ENCODE measurements at regions of chr10 and their contacts with region 1.

Region 1: GRCh38 chr10:105950410-105950809 is 1214.1 kb downstream of the SORCS1 start:
- DNase-seq: peak; percentile 56
- H3K4me3 Mint-ChIP-seq: no peak overlapping the region
- H3K27ac Mint-ChIP-seq: no peak overlapping the region
- H3K4me1 Mint-ChIP-seq: no peaks in the 10 kb centered on the region
- H3K27me3 Mint-ChIP-seq: no peaks in the 10 kb centered on the region

Region 2: GRCh38 chr10:105803206-105803605 is 147.2 kb before region 1 on chr10:
- CTCF ChIA-PET with region 1: no interaction called
- intact Hi-C with region 1: no loop called
- DNase-seq: no peak
- H3K4me3 Mint-ChIP-seq: no peak overlapping the region
- H3K27ac Mint-ChIP-seq: no peak overlapping the region
- H3K4me1 Mint-ChIP-seq: no peaks in the 10 kb centered on the region
- H3K27me3 Mint-ChIP-seq: no peaks in the 10 kb centered on the region

Region 3: GRCh38 chr10:105974803-105975456 is 24.5 kb after region 1 on chr10:
- CTCF ChIA-PET with region 1: interaction called, 7 read pairs
- intact Hi-C with region 1: loop called (anchors 2 kb)
- DNase-seq: peak; percentile 5
- H3K4me3 Mint-ChIP-seq: no peak overlapping the region
- H3K27ac Mint-ChIP-seq: no peak overlapping the region
- H3K4me1 Mint-ChIP-seq: no peaks in the 10 kb centered on the region
- H3K27me3 Mint-ChIP-seq: no peaks in the 10 kb centered on the region

Region 4: GRCh38 chr10:106175760-106176377 is 225.5 kb after region 1 on chr10:
- CTCF ChIA-PET with region 1: no interaction called
- intact Hi-C with region 1: loop called (anchors 1 kb)
- DNase-seq: no peak
- H3K4me3 Mint-ChIP-seq: no peak overlapping the region
- H3K27ac Mint-ChIP-seq: no peak overlapping the region
- H3K4me1 Mint-ChIP-seq: no peaks in the 10 kb centered on the region
- H3K27me3 Mint-ChIP-seq: no peaks in the 10 kb centered on the region

Measured in activated naive CD4-positive, alpha-beta T cell treated with anti-CD3 and anti-CD28 coated beads for 36 hours (primary cell).